Dendritic cell treated with granulocyte-macrophage colony-stimulating factor and Interleukin-4, amounts not matched to agents 40 ng/mL and 50 ng/mL, for 4 days (primary cell): ENCODE measurements at regions of chr5 and their contacts with region 1.

Region 1: GRCh38 chr5:32312647-32313523 is at the start of gene MTMR12:
- H3K4me3 Mint-ChIP-seq: peak within 1 kb of the TSS; percentile 76
- H3K27ac Mint-ChIP-seq: peak within 1 kb of the TSS; percentile 81
- H3K4me1 Mint-ChIP-seq: peaks cover 45% of the 10 kb centered on the region
- H3K27me3 Mint-ChIP-seq: no peaks in the 10 kb centered on the region

Region 2: GRCh38 chr5:31531888-31532710 is 780.8 kb before region 1 on chr5 and contains the starts of genes C5orf22 and DROSHA:
- intact Hi-C with region 1: loop called (anchors 5 kb)
- H3K4me3 Mint-ChIP-seq: peak within 1 kb of the TSS; percentile 81
- H3K27ac Mint-ChIP-seq: peak within 1 kb of the TSS; percentile 84
- H3K4me1 Mint-ChIP-seq: peaks cover 41% of the 10 kb centered on the region
- H3K27me3 Mint-ChIP-seq: no peaks in the 10 kb centered on the region

Region 3: DNA sequence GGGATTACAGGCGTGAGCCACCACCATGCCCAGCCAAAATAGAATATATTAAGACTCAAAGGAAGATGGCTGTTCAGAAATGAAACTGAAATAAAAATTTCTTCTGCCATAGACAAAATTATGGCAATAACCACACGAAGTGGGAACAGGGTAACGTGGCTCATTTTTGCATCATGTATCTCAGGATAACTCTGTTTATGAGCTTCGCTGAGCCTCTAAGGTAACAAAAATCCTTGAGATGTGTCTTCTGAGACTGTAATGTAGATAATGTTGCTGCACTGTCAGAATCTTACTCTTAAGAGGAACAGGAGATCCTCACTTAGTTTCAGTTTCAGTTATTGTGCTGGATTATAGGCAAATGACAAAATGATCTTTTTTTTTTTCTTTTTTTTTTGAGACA is 292.6 kb before region 1 on chr5:
- intact Hi-C with region 1: no loop called
- H3K4me3 Mint-ChIP-seq: peak overlapping the region; percentile 56
- H3K27ac Mint-ChIP-seq: peak overlapping the region; percentile 59
- H3K4me1 Mint-ChIP-seq: peaks cover 14% of the 10 kb centered on the region
- H3K27me3 Mint-ChIP-seq: no peaks in the 10 kb centered on the region

Region 4: GRCh38 chr5:32074401-32074800 is 238.5 kb before region 1 on chr5:
- intact Hi-C with region 1: no loop called
- H3K4me3 Mint-ChIP-seq: no peak overlapping the region
- H3K27ac Mint-ChIP-seq: no peak overlapping the region
- H3K4me1 Mint-ChIP-seq: no peaks in the 10 kb centered on the region
- H3K27me3 Mint-ChIP-seq: no peaks in the 10 kb centered on the region

Region 5: DNA sequence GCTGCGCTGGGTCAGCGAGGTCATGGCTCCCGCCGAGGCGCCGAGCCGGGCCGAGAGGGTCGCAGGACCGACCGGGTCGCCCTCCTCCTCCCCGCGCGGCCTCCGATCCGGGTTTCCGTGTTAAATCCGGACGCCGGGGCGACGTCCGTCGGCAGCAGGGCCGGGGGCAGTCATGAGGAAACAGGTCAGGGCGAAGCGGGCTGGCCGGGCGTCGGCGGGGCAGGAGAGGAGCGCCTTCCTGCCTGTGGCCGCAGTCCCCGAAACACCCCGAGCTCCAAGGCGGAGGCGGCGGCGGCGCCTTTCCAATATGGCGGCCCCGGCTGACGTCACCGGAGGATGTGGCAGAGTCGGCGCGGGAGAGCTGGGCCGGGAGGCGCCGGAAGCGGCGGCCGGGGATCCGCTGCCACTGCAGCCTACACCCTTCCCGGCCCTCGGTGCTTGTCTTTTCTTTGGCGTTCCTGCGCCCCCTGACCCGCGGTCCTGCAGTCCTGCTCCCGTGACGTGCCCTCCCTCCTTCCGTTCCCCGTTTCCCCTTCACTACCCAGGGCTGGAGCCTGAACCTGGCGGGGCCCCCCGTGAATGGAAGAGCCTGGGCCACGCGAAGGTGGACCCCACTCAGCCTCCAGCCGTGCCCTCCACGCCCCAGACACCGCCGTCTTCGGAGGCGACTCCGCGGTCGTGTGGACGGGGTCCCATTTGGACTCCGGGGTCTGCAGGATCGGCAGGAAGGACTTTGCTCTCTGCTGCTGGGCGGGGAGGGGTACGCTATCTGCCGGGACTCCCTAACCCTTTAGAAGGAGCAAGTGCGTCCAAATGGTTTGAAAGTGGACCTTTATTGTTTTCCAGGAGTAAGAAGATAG is 138.6 kb before region 1 on chr5 and contains the start of gene GOLPH3:
- intact Hi-C with region 1: loop called (anchors 2 kb)
- H3K4me3 Mint-ChIP-seq: peak within 1 kb of the TSS; percentile 100
- H3K27ac Mint-ChIP-seq: peak within 1 kb of the TSS; percentile 100
- H3K4me1 Mint-ChIP-seq: peaks cover 39% of the 10 kb centered on the region
- H3K27me3 Mint-ChIP-seq: no peaks in the 10 kb centered on the region

Region 6: GRCh38 chr5:32232441-32233219 is 80.3 kb before region 1 on chr5:
- intact Hi-C with region 1: loop called (anchors 5 kb)
- H3K4me3 Mint-ChIP-seq: peak overlapping the region; percentile 32
- H3K27ac Mint-ChIP-seq: peak overlapping the region; percentile 82
- H3K4me1 Mint-ChIP-seq: peaks cover 53% of the 10 kb centered on the region
- H3K27me3 Mint-ChIP-seq: no peaks in the 10 kb centered on the region

Region 7: DNA sequence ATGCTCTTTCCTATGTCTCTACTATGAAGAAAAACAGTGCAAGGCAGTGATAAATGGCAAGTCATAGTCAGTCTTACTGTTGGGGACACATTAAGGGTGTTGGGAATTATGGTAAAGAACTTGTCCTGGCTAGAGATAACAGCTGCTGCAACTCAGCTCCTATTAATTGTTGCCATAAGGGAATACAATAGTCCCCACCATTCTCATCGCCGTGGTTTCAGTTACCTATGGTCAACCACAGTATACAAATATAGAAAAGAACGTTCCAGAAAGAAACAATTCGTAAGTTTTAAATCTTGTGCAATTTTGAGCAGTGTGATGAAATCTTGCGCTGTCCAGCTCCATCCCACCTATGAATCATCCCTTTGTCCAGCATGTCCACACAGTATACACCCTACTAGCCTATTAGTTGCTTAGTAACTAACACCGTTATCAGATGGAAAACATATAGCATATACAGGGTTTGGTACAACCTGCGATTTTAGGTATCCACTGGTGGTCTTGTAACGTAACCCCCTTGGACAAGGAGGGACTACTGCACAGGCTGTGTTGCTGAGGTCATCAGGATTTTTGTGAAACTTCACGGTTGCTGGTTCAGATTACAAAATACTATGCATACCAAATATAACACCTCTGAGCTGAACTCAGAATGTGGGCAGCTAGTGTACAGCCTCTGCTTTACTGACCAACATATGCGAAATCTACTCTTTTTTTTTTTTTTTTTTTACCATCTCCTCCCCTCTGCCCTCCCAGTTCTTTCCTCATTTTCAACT is 78.1 kb after region 1 on chr5:
- intact Hi-C with region 1: no loop called
- H3K4me3 Mint-ChIP-seq: no peak overlapping the region
- H3K27ac Mint-ChIP-seq: no peak overlapping the region
- H3K4me1 Mint-ChIP-seq: peaks cover 23% of the 10 kb centered on the region
- H3K27me3 Mint-ChIP-seq: no peaks in the 10 kb centered on the region

Region 8: DNA sequence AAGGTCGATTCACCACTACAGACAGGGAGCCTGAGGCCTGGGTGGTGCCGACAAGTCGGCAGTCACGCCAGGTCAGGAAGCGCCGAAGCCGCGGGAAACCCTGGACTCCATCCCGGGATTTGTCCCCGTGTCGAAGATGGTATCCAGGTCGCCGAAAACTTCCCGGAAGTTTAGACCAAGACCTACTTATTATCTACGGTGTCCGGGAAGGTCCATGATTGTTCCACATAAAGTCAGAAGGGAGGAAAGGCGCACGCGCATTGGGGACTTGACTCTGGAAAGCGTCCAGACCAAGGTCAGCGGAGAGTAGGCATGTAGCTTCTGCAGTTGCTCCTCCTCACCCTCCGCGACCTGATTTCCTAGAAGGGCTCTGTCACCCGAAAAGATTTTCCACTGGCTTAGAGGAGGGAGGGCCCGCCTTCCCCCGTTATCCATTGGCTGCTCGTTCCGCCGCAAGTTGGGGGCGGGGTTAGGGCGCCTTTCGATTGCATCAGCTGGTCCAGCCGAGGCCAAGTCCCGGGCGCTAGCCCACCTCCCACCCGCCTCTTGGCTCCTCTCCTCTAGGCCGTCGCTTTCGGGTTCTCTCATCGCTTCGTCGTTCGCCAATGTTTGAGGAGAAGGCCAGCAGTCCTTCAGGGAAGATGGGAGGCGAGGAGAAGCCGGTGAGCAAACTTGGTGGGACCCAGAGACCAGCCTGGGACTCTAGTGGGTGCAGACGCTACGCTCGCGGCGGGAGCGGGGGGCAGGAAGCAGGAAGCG is 1127.8 kb after region 1 on chr5 and contains the start of gene TARS1:
- intact Hi-C with region 1: loop called (anchors 5 kb)
- H3K4me3 Mint-ChIP-seq: no peak within 1 kb of the TSS
- H3K27ac Mint-ChIP-seq: no peak within 1 kb of the TSS
- H3K4me1 Mint-ChIP-seq: peaks cover 20% of the 10 kb centered on the region
- H3K27me3 Mint-ChIP-seq: no peaks in the 10 kb centered on the region